Calu3 (cell line): ENCODE measurements at regions of chr11 and their contacts with region 1.

Region 1: GRCh38 chr11:20110908-20111669 is 49.2 kb downstream of the DBX1 start:
- DNase-seq: peak; percentile 78
- H3K4me3 Mint-ChIP-seq: no peak overlapping the region
- H3K27ac Mint-ChIP-seq: peak overlapping the region; percentile 81
- H3K4me1 Mint-ChIP-seq: peaks cover 29% of the 10 kb centered on the region
- H3K27me3 Mint-ChIP-seq: no peaks in the 10 kb centered on the region
- CTCF ChIP-seq: peak; percentile 77

Region 2: DNA sequence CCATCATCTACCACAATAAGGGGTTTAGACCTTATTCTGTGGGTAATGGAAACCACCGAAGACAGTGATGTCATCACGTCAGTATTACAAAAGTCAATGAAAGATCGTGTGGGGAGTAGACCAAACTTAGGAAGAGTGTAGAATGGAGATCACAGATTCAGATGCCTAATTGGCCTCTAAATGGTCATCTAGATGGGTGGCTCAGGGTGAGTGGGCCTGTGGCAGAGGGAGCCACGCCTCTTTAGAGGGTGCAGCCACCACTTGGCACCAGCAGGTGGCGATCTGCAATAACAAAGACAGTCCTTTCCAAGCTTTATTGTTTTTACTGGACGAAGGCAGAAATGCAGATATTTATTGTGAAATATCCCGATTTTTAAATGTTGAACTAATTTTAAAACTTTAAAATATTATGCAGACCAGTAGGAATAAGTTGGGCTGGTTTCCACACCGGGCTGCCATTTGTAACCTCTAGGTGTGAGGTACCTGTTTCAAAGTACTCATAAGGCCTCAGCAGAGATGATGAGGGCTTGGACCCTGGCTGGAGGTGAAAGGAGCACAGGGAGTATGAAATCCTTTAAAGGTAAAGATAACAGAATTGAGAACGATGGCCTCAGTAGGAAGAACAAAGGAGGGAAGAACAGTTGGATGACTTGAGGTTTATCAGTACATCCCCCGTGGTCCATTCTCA is 172.8 kb before region 1 on chr11:
- CTCF ChIA-PET with region 1: interaction called, 8 read pairs
- intact Hi-C with region 1: loop called (anchors 5 kb)
- DNase-seq: peak; percentile 74
- H3K4me3 Mint-ChIP-seq: no peak overlapping the region
- H3K27ac Mint-ChIP-seq: peak overlapping the region; percentile 16
- H3K4me1 Mint-ChIP-seq: peaks cover 29% of the 10 kb centered on the region
- H3K27me3 Mint-ChIP-seq: no peaks in the 10 kb centered on the region
- CTCF ChIP-seq: peak; percentile 78

Region 3: DNA sequence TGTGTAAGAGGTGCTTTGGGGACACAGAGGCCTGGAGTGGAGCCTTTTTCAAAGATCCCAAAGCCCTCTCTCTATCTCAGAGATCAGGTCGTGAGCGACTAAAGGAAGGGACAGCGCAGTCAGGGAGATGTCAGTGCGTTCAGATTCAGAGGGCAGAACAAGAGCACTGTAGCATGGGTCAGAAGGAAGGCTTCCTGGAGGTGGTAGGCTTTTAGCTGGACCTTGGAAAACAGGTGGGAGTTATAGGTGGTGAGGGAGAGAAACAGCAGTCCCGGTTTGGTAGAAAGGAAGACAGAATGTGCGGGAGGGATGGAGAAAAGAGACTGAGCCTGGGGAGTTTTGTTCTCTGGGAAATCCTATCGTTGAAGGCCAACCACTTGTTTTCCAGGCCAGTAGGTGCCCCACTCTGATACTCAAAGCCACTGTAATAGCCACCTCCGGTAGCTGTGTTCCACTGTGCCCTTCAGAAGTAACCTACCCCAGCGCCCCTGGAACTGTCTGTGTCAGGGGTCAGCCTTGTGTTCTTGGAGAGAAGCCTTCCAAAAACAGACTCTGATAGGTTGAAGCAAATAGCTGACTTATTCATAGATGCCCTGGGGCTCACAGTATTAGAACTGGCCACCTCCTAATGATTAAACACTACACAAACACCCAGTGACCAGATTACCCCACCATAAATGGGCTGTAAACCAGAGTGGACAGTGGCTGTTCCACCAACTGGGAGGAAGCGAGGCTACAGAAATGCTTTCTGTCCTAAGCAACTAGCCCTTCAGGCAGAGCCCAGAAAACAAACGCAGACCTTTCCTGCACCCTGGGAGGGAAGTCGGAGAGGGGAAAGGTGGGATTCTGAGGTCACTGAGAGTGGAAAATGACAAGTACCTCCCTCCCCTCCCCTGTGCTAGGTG is 108.5 kb before region 1 on chr11:
- CTCF ChIA-PET with region 1: interaction called, 4 read pairs
- intact Hi-C with region 1: loop called (anchors 2 kb)
- DNase-seq: peak; percentile 71
- H3K4me3 Mint-ChIP-seq: peak overlapping the region; percentile 38
- H3K27ac Mint-ChIP-seq: peak overlapping the region; percentile 86
- H3K4me1 Mint-ChIP-seq: peaks cover 54% of the 10 kb centered on the region
- H3K27me3 Mint-ChIP-seq: no peaks in the 10 kb centered on the region
- CTCF ChIP-seq: no peak

Region 4: GRCh38 chr11:21771097-21771496 is 1660.0 kb after region 1 on chr11:
- CTCF ChIA-PET with region 1: no interaction called
- intact Hi-C with region 1: no loop called
- DNase-seq: no peak
- H3K4me3 Mint-ChIP-seq: no peak overlapping the region
- H3K27ac Mint-ChIP-seq: no peak overlapping the region
- H3K4me1 Mint-ChIP-seq: no peaks in the 10 kb centered on the region
- H3K27me3 Mint-ChIP-seq: no peaks in the 10 kb centered on the region
- CTCF ChIP-seq: no peak